Activated B cell treated with CpG ODN at 0.5 μM for 24 hours (primary cell): ENCODE measurements at regions of chr6 and their contacts with region 1.

Region 1: GRCh38 chr6:137823826-137824555 is 43.1 kb upstream of the TNFAIP3 start:
- DNase-seq: no peak
- ATAC-seq: peak; percentile 33
- H3K4me3 Mint-ChIP-seq: peak overlapping the region; percentile 46
- H3K27ac Mint-ChIP-seq: peak overlapping the region; percentile 77
- H3K4me1 Mint-ChIP-seq: peaks cover 67% of the 10 kb centered on the region
- H3K27me3 Mint-ChIP-seq: no peaks in the 10 kb centered on the region
- CTCF ChIP-seq: no peak

Region 2: GRCh38 chr6:137846772-137847313 is 22.9 kb after region 1 on chr6:
- CTCF ChIA-PET with region 1: interaction called, 3 read pairs
- POLR2A ChIA-PET with region 1: interaction called, 3 read pairs
- intact Hi-C with region 1: loop called (anchors 1 kb)
- DNase-seq: peak; percentile 27
- ATAC-seq: peak; percentile 90
- H3K4me3 Mint-ChIP-seq: no peak overlapping the region
- H3K27ac Mint-ChIP-seq: no peak overlapping the region
- H3K4me1 Mint-ChIP-seq: peaks cover 10% of the 10 kb centered on the region
- H3K27me3 Mint-ChIP-seq: no peaks in the 10 kb centered on the region
- CTCF ChIP-seq: no peak

Region 3: GRCh38 chr6:137852346-137852745 is 28.4 kb after region 1 on chr6:
- CTCF ChIA-PET with region 1: interaction called, 3 read pairs
- POLR2A ChIA-PET with region 1: no interaction called
- intact Hi-C with region 1: loop called (anchors 1 kb)
- DNase-seq: no peak
- ATAC-seq: no peak
- H3K4me3 Mint-ChIP-seq: no peak overlapping the region
- H3K27ac Mint-ChIP-seq: no peak overlapping the region
- H3K4me1 Mint-ChIP-seq: peaks cover 26% of the 10 kb centered on the region
- H3K27me3 Mint-ChIP-seq: no peaks in the 10 kb centered on the region
- CTCF ChIP-seq: no peak